Activated B cell treated with CpG ODN at 0.5 μM for 24 hours (primary cell): ENCODE measurements at regions of chr1 and their contacts with region 1.

Region 1: DNA sequence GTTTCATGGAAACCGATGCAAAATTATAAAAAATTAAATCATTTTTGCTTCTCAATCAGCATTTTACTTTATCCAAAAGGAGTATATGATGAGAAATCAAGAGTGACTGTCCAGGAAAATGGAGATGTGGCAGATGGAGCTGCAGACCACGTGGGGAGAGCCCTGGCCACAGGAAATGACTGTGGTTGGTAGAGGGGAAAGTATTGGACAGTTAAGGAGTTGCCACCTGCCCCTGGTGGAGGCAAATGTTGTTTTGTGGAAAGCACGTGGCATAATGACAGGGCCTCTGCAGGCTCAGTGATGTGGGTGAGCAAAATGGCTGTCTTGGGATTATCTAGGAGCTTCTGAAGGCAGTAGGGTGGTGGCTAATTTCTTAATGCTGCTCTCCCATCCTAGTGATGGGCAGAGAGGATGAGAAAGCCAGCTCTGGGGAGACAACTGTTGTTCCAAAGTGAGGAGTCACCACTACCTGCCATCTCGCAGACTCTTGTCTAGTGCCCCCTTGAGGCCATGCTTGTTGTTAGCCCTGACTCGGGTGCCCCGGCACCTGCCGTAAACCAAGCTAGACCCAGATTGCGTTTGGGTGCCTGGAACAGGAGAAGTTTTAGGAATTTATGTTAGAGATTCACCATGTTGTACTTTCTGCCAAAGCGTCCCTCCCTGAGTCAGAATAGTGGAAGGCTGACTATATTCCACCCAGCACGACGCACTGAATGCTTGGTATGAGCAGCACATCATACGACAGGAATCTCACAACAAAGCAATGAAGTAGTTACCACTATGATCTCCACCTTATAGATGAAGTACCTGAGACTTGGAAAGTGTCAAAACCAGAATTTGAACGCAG is 144.0 kb downstream of the ROR1 start:
- DNase-seq: no peak
- ATAC-seq: no peak
- H3K4me3 Mint-ChIP-seq: no peak overlapping the region
- H3K27ac Mint-ChIP-seq: no peak overlapping the region
- H3K4me1 Mint-ChIP-seq: no peaks in the 10 kb centered on the region
- H3K27me3 Mint-ChIP-seq: peaks cover 14% of the 10 kb centered on the region
- CTCF ChIP-seq: no peak

Region 2: DNA sequence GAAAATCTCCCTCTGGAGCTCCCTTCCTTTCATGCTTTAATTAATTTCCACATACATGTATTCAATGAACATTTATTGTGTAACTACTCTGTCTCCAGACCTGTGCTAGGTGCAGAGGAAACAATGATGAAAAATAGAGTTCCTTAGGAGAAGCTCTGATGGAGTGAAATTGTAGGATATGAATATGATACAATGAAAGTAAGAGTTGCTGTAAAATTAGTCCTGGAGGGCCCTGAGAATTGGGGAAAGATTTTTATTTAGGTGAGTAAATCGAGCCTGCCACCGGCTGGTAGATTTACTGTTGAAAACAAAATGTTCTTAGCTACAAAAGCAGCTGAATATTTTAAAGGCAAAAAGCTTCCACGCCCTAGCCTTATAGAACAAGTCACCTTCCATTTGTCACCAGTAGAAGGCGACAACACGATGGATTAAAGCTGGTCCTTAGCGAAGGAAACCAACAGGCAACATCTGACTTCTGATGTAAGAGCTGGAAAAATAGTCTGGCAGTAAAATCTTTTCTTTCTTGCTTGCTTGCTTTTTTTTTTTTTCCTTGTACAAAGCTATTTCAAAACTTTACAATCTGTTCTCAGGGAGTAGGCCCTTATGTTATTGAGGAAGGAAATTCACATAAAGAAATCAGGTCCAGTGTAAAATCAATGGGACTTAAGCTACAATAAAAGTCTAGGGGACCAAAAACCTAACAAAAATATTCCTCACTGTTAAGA is 225.9 kb before region 1 on chr1:
- CTCF ChIA-PET with region 1: interaction called, 63 read pairs
- POLR2A ChIA-PET with region 1: interaction called, 3 read pairs
- intact Hi-C with region 1: loop called (anchors 1 kb)
- DNase-seq: no peak
- ATAC-seq: peak; percentile 57
- H3K4me3 Mint-ChIP-seq: no peak overlapping the region
- H3K27ac Mint-ChIP-seq: no peak overlapping the region
- H3K4me1 Mint-ChIP-seq: no peaks in the 10 kb centered on the region
- H3K27me3 Mint-ChIP-seq: peaks cover 8% of the 10 kb centered on the region
- CTCF ChIP-seq: no peak

Region 3: DNA sequence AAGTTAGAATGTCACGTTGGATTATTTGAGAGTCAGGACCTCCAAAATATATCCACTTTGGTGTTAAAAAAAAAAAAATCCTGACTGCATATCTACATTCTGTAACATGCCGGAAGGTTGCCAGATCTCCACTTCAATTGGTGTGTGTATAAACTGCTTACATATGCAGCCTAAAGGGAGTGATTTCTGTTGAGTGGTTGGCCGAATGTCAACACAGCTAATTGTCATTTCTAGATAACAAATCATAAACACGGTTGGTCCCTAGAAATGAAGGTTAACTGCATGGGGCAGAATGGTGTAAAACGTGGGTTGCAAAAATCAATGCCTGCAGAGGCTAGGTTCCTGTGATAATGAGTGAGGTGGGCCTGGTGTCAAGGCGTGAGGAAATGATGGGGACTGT is 159.0 kb before region 1 on chr1:
- CTCF ChIA-PET with region 1: no interaction called
- POLR2A ChIA-PET with region 1: no interaction called
- intact Hi-C with region 1: no loop called
- DNase-seq: no peak
- ATAC-seq: no peak
- H3K4me3 Mint-ChIP-seq: no peak overlapping the region
- H3K27ac Mint-ChIP-seq: no peak overlapping the region
- H3K4me1 Mint-ChIP-seq: no peaks in the 10 kb centered on the region
- H3K27me3 Mint-ChIP-seq: no peaks in the 10 kb centered on the region
- CTCF ChIP-seq: no peak

Region 4: GRCh38 chr1:63773815-63774616 is 143.8 kb before region 1 on chr1 and contains the start of gene ROR1:
- CTCF ChIA-PET with region 1: interaction called, 14 read pairs
- POLR2A ChIA-PET with region 1: no interaction called
- intact Hi-C with region 1: loop called (anchors 1 kb)
- DNase-seq: peak; percentile 53
- ATAC-seq: peak; percentile 96
- H3K4me3 Mint-ChIP-seq: peak within 1 kb of the TSS; percentile 85
- H3K27ac Mint-ChIP-seq: no peak within 1 kb of the TSS
- H3K4me1 Mint-ChIP-seq: peaks cover 22% of the 10 kb centered on the region
- H3K27me3 Mint-ChIP-seq: peaks cover 40% of the 10 kb centered on the region
- CTCF ChIP-seq: no peak
- total RNA-seq, gene ROR1: 1.8 and 2.2 TPM in 2 replicates

Region 5: GRCh38 chr1:63843884-63844283 is 73.9 kb before region 1 on chr1:
- CTCF ChIA-PET with region 1: interaction called, 11 read pairs
- POLR2A ChIA-PET with region 1: no interaction called
- intact Hi-C with region 1: no loop called
- DNase-seq: no peak
- ATAC-seq: no peak
- H3K4me3 Mint-ChIP-seq: no peak overlapping the region
- H3K27ac Mint-ChIP-seq: no peak overlapping the region
- H3K4me1 Mint-ChIP-seq: no peaks in the 10 kb centered on the region
- H3K27me3 Mint-ChIP-seq: peaks cover 5% of the 10 kb centered on the region
- CTCF ChIP-seq: no peak

Region 6: DNA sequence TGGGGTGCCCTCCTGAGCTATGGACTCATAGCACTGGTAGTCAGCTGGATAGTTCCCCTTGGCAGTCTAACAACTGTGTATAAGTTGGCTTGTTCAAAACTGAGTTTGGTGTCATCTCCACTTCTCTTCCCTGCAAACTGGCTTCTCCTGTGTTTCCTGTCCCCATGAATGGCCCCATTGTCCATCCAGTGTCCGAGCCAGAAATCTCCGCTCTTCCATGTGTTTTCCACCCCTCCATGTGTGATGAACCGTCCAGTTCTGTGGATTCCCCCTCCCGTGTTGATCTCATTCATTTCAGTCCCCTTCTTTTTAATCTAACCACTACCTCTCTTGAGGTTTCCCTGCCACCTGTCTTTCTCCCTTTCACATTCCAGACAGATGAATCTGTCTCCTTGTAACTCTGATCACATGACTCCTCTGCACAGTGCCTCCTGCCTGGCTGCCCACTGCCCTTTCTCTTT is 51.7 kb after region 1 on chr1:
- CTCF ChIA-PET with region 1: no interaction called
- POLR2A ChIA-PET with region 1: no interaction called
- intact Hi-C with region 1: no loop called
- DNase-seq: no peak
- ATAC-seq: no peak
- H3K4me3 Mint-ChIP-seq: no peak overlapping the region
- H3K27ac Mint-ChIP-seq: no peak overlapping the region
- H3K4me1 Mint-ChIP-seq: no peaks in the 10 kb centered on the region
- H3K27me3 Mint-ChIP-seq: no peaks in the 10 kb centered on the region
- CTCF ChIP-seq: no peak

Region 7: GRCh38 chr1:64242895-64243756 is 325.3 kb after region 1 on chr1:
- CTCF ChIA-PET with region 1: interaction called, 3 read pairs
- POLR2A ChIA-PET with region 1: no interaction called
- intact Hi-C with region 1: loop called (anchors 1 kb)
- DNase-seq: no peak
- ATAC-seq: no peak
- H3K4me3 Mint-ChIP-seq: peak overlapping the region; percentile 50
- H3K27ac Mint-ChIP-seq: no peak overlapping the region
- H3K4me1 Mint-ChIP-seq: peaks cover 15% of the 10 kb centered on the region
- H3K27me3 Mint-ChIP-seq: peaks cover 20% of the 10 kb centered on the region
- CTCF ChIP-seq: no peak